ENCODE measurements at regions of chr5 and their contacts with region 1.

Region 1: DNA sequence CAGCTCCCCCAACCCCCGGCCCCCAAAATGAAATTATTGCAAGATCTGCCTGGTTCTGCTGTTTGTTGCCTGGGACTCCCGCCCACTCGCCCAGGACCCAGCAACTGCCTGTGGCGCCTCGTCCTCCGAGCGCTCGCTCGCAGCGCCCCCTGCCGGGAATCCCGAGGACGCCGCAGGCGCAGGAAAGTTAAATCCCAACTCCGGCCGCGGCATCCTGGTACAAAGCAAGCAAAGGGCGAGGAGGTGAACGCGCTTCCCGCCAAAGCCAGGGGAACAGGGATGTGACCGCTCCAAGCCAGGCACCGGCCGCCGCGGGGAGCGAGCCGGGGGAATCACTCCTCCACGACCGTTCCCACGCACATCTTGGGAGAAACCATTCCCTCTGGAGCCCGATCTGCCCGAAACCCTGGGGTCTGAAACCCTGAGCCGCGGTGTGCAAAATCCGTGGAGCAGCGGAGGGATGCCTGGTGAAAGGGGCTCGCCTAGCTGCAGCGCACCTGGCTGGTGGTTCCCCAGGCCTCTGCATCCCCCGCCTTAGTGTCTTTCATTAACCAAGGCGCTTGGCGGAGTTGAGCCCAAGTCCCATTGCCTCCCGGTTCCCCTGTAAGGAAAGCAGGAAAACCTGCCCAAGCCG is 1.3 kb downstream of the SEMA5A start:
- DNase-seq: peak; percentile 82 to 93
- H3K4me3 ChIP-seq: peak overlapping the region; percentile 94
- H3K4me3 Mint-ChIP-seq: peak overlapping the region; percentile 96
- H3K27ac Mint-ChIP-seq: peak overlapping the region; percentile 56
- H3K4me1 ChIP-seq: no peaks in the 10 kb centered on the region
- H3K4me1 Mint-ChIP-seq: peaks cover 6% of the 10 kb centered on the region
- H3K27me3 ChIP-seq: no peaks in the 10 kb centered on the region
- H3K27me3 Mint-ChIP-seq: no peaks in the 10 kb centered on the region
- CTCF ChIP-seq: peak; percentile 90 to 94

Region 2: GRCh38 chr5:8766448-8766847 is 778.2 kb before region 1 on chr5:
- CTCF ChIA-PET with region 1: no interaction called
- POLR2A ChIA-PET with region 1: no interaction called
- intact Hi-C with region 1: loop called (anchors 5 kb)
- DNase-seq: no peak
- H3K4me3 ChIP-seq: no peak overlapping the region
- H3K4me3 Mint-ChIP-seq: no peak overlapping the region
- H3K27ac Mint-ChIP-seq: no peak overlapping the region
- H3K4me1 ChIP-seq: no peaks in the 10 kb centered on the region
- H3K4me1 Mint-ChIP-seq: no peaks in the 10 kb centered on the region
- H3K27me3 ChIP-seq: no peaks in the 10 kb centered on the region; the same call in 1 of the 2 replicates
- H3K27me3 Mint-ChIP-seq: no peaks in the 10 kb centered on the region
- CTCF ChIP-seq: no peak

Region 3: GRCh38 chr5:9156282-9156681 is 388.3 kb before region 1 on chr5:
- CTCF ChIA-PET with region 1: interaction called, 5 read pairs
- POLR2A ChIA-PET with region 1: no interaction called
- intact Hi-C with region 1: loop called (anchors 1 kb)
- DNase-seq: peak; percentile 69 to 73
- H3K4me3 ChIP-seq: no peak overlapping the region
- H3K4me3 Mint-ChIP-seq: no peak overlapping the region
- H3K27ac Mint-ChIP-seq: no peak overlapping the region
- H3K4me1 ChIP-seq: peaks cover 13% of the 10 kb centered on the region
- H3K4me1 Mint-ChIP-seq: peaks cover 16% of the 10 kb centered on the region
- H3K27me3 ChIP-seq: no peaks in the 10 kb centered on the region
- H3K27me3 Mint-ChIP-seq: no peaks in the 10 kb centered on the region
- CTCF ChIP-seq: peak; percentile 64 to 84

Region 4: DNA sequence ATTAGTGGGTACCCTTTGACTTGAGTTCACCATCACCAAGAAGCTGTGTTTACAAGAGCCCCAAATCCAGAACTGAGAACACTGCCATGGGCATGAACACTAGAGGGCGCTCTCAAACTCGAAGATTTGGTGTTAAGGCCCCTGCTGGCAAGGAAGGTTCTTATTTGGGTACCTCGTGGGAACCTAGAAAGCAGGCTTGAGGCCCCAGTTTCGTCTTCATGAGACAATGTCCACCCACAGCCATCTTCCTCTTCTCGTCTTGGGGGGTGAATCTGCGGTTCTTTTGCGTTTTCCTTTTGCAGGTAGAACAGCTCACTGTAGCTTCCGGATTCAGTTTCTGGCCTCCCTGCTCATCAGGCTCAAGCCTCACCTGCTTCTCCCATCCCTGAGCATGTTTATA is 182.8 kb before region 1 on chr5:
- CTCF ChIA-PET with region 1: no interaction called
- POLR2A ChIA-PET with region 1: no interaction called
- intact Hi-C with region 1: loop called (anchors 2 kb)
- DNase-seq: peak; percentile 58 to 65
- H3K4me3 ChIP-seq: no peak overlapping the region
- H3K4me3 Mint-ChIP-seq: no peak overlapping the region
- H3K27ac Mint-ChIP-seq: no peak overlapping the region
- H3K4me1 ChIP-seq: peaks cover 24% of the 10 kb centered on the region; the same call in 1 of the 2 replicates
- H3K4me1 Mint-ChIP-seq: peaks cover 30% of the 10 kb centered on the region
- H3K27me3 ChIP-seq: no peaks in the 10 kb centered on the region
- H3K27me3 Mint-ChIP-seq: no peaks in the 10 kb centered on the region
- CTCF ChIP-seq: peak; percentile 72 to 73

Region 5: DNA sequence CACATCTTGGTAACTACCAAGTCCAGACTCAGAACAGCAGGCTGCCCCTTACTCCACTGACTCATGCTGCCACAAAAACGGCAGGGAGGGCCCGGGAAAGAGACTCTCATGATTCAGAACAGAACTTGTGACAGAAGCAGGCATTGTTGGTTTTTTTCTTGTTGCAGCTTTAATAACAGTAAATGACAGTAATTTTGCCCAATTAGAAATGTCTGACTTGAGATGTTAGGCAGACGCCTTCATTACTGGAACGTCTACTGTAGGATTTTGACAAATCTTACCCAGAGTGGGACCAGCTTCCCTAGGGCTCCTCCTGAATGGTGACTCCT is 76.6 kb before region 1 on chr5:
- CTCF ChIA-PET with region 1: no interaction called
- POLR2A ChIA-PET with region 1: no interaction called
- intact Hi-C with region 1: no loop called
- DNase-seq: no peak
- H3K4me3 ChIP-seq: no peak overlapping the region
- H3K4me3 Mint-ChIP-seq: no peak overlapping the region
- H3K27ac Mint-ChIP-seq: no peak overlapping the region
- H3K4me1 ChIP-seq: no peaks in the 10 kb centered on the region
- H3K4me1 Mint-ChIP-seq: no peaks in the 10 kb centered on the region
- H3K27me3 ChIP-seq: no peaks in the 10 kb centered on the region
- H3K27me3 Mint-ChIP-seq: no peaks in the 10 kb centered on the region
- CTCF ChIP-seq: no peak

Region 6: GRCh38 chr5:9622971-9623421 is 78.4 kb after region 1 on chr5:
- CTCF ChIA-PET with region 1: no interaction called
- POLR2A ChIA-PET with region 1: no interaction called
- intact Hi-C with region 1: loop called (anchors 2 kb)
- DNase-seq: no peak
- H3K4me3 ChIP-seq: no peak overlapping the region
- H3K4me3 Mint-ChIP-seq: peak overlapping the region; percentile 7
- H3K27ac Mint-ChIP-seq: peak overlapping the region; percentile 90
- H3K4me1 ChIP-seq: peaks cover 51% of the 10 kb centered on the region
- H3K4me1 Mint-ChIP-seq: peaks cover 57% of the 10 kb centered on the region
- H3K27me3 ChIP-seq: no peaks in the 10 kb centered on the region
- H3K27me3 Mint-ChIP-seq: no peaks in the 10 kb centered on the region
- CTCF ChIP-seq: no peak

Region 7: GRCh38 chr5:9829621-9830567 is 285.3 kb after region 1 on chr5:
- CTCF ChIA-PET with region 1: no interaction called
- POLR2A ChIA-PET with region 1: no interaction called
- intact Hi-C with region 1: loop called (anchors 2 kb)
- DNase-seq: peak in 1 of 2 experiments; percentile 30
- H3K4me3 ChIP-seq: no peak overlapping the region
- H3K4me3 Mint-ChIP-seq: peak overlapping the region; percentile 1
- H3K27ac Mint-ChIP-seq: peak overlapping the region; percentile 14
- H3K4me1 ChIP-seq: peaks cover 53% of the 10 kb centered on the region
- H3K4me1 Mint-ChIP-seq: peaks cover 40% of the 10 kb centered on the region
- H3K27me3 ChIP-seq: no peaks in the 10 kb centered on the region
- H3K27me3 Mint-ChIP-seq: no peaks in the 10 kb centered on the region
- CTCF ChIP-seq: no peak